PC-9 (cell line): ENCODE measurements at regions of chr1 and their contacts with region 1.

Region 1: GRCh38 chr1:67149179-67149770 is 14.5 kb upstream of the C1orf141 start:
- DNase-seq: peak; percentile 40 to 45
- H3K4me3 ChIP-seq: no peak overlapping the region
- H3K27ac ChIP-seq: no peak overlapping the region
- H3K4me1 ChIP-seq: no peaks in the 10 kb centered on the region
- H3K27me3 ChIP-seq: no peaks in the 10 kb centered on the region
- CTCF ChIP-seq: peak; percentile 60

Region 2: GRCh38 chr1:66764994-66765578 is 384.2 kb before region 1 on chr1:
- CTCF ChIA-PET with region 1: interaction called, 3 read pairs
- POLR2A ChIA-PET with region 1: interaction called, 15 read pairs
- intact Hi-C with region 1: loop called (anchors 2 kb)
- DNase-seq: peak in 1 of 2 experiments; percentile 34
- H3K4me3 ChIP-seq: no peak overlapping the region
- H3K27ac ChIP-seq: no peak overlapping the region
- H3K4me1 ChIP-seq: no peaks in the 10 kb centered on the region
- H3K27me3 ChIP-seq: no peaks in the 10 kb centered on the region
- CTCF ChIP-seq: peak; percentile 86

Region 3: GRCh38 chr1:66996018-66996682 is 153.1 kb before region 1 on chr1:
- CTCF ChIA-PET with region 1: interaction called, 21 read pairs
- POLR2A ChIA-PET with region 1: no interaction called
- intact Hi-C with region 1: loop called (anchors 1 kb)
- DNase-seq: peak; percentile 49 to 53
- H3K4me3 ChIP-seq: no peak overlapping the region
- H3K27ac ChIP-seq: no peak overlapping the region
- H3K4me1 ChIP-seq: no peaks in the 10 kb centered on the region
- H3K27me3 ChIP-seq: no peaks in the 10 kb centered on the region
- CTCF ChIP-seq: peak; percentile 83

Region 4: DNA sequence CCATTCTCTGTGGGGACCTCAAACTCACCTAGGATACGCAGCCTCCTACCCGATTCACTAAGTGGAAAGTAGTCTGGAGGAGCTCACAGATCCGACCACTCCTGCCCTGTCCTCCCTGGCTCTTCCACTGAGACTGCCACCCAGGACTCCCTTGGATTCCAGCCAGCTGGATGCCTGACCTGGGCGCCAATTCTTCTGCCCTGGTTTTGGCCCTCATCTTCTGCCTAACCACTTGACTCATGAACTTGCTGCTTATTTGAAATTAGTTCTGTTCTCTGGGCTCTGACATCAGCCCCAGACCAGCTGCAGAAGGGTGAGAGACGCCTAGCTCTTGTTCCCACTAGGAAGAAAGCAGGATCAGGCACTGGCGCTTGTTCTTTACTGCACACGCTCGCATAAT is 144.2 kb before region 1 on chr1:
- CTCF ChIA-PET with region 1: interaction called, 11 read pairs
- POLR2A ChIA-PET with region 1: no interaction called
- intact Hi-C with region 1: no loop called
- DNase-seq: no peak
- H3K4me3 ChIP-seq: no peak overlapping the region
- H3K27ac ChIP-seq: no peak overlapping the region
- H3K4me1 ChIP-seq: no peaks in the 10 kb centered on the region
- H3K27me3 ChIP-seq: no peaks in the 10 kb centered on the region
- CTCF ChIP-seq: no peak